SK-N-SH (cell line): ENCODE measurements at regions of chr5 and their contacts with region 1.

Region 1: GRCh38 chr5:172707285-172708182 is 63.5 kb downstream of the DUSP1 start:
- DNase-seq: peak; percentile 79
- H3K4me3 ChIP-seq: no peak overlapping the region
- H3K27ac ChIP-seq: no peak overlapping the region
- H3K4me1 ChIP-seq: peaks cover 0 to 3% of the 10 kb centered on the region in 2 experiments; a peak in 2 of 4 replicates
- H3K27me3 ChIP-seq: no peaks in the 10 kb centered on the region
- CTCF ChIP-seq: peak; percentile 74
- EP300 ChIP-seq: no peak
- RAD21 ChIP-seq: peak; percentile 87

Region 2: GRCh38 chr5:172770675-172771438 is 63.3 kb after region 1 on chr5 and contains the start of gene DUSP1:
- CTCF ChIA-PET with region 1: interaction called, 113 read pairs
- POLR2A ChIA-PET with region 1: interaction called, 3 read pairs
- DNase-seq: peak; percentile 99
- H3K4me3 ChIP-seq: peak within 1 kb of the TSS; percentile 89 to 93
- H3K27ac ChIP-seq: peak within 1 kb of the TSS; percentile 97 to 100
- H3K4me1 ChIP-seq: peaks cover 23 to 36% of the 10 kb centered on the region in 2 experiments
- H3K27me3 ChIP-seq: no peaks in the 10 kb centered on the region
- CTCF ChIP-seq: peak; percentile 50
- EP300 ChIP-seq: no peak
- RAD21 ChIP-seq: peak; percentile 36
- polyA plus RNA-seq, gene DUSP1: 373 and 455 TPM in 2 replicates

Region 3: DNA sequence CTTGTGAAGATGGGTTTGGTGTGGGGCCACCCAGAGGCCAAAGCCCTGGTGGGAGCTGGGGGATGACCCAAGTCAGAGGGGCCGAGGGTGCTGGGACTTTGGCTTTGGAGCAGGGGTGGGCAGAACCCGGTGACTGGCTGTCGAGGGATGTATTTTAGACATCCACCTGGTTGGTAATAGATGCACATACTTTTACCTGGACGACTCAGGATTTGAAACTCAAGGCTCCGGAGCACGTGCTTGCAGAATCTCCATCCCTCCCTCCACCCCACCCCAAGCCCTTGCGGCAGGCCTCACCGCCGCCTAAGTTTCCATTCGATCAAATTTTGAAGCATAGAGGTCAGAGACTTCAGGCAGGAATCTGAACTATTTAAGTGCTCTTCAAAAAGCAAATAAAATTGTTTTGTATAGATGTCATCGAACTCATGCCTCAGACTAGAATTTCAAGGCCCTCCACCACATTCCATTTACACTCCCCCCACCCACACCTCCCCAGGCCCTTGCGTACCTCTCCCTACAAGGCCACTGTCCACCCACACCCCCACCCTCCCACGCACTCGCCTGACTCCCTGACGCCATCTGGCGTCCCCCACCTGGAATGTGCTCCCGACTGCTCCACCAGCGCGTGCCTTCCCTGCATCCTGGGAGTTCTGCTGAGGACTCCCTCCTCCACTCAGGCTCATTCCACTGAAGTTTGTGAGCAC is 195.1 kb after region 1 on chr5:
- CTCF ChIA-PET with region 1: interaction called, 23 read pairs
- POLR2A ChIA-PET with region 1: no interaction called
- DNase-seq: peak; percentile 72
- H3K4me3 ChIP-seq: no peak overlapping the region
- H3K27ac ChIP-seq: peak overlapping the region in 1 of 2 experiments; percentile 100; a peak in 2 of 4 replicates
- H3K4me1 ChIP-seq: peaks cover 30 to 68% of the 10 kb centered on the region in 2 experiments
- H3K27me3 ChIP-seq: no peaks in the 10 kb centered on the region
- CTCF ChIP-seq: peak; percentile 50
- EP300 ChIP-seq: no peak
- RAD21 ChIP-seq: peak; percentile 58

Region 4: DNA sequence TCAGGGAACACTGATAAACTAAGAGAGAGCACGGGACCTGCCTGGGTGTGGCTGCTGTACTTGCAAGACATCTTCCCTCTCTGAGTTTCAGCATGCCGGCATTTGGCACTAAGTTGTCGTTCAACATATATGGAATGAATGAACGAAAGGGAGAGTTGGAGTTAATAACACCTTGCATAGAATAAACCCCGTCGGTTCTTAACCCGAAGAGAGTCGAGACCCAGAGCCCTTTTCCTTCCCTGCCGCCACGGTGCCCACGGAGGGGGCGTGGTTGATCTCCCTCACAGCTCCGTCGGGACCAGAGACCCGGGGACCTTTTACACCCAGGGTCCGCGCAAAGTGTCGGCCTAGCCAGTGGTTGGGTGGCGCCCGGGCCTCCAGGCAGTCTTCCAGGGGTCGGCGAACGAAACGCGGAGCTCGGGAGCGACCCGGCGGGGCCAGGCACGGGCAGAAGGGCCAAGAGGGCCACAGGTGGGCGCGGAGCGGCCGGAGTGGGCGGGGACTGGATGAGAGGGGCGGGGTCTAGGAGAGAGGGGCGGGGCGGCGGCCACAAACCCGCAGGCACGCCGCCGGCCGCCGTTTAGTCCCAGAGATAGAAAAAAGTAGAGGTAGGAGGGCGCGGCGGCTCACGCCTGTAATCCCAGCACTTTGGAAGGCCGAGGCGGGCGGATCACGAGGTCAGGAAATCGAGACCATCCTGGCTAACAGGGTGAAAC is 251.0 kb after region 1 on chr5:
- CTCF ChIA-PET with region 1: interaction called, 11 read pairs
- POLR2A ChIA-PET with region 1: no interaction called
- DNase-seq: peak; percentile 95
- H3K4me3 ChIP-seq: peak overlapping the region; percentile 86 to 99
- H3K27ac ChIP-seq: peak overlapping the region in 1 of 2 experiments; percentile 97; a peak in 3 of 4 replicates
- H3K4me1 ChIP-seq: peaks cover 10 to 14% of the 10 kb centered on the region in 2 experiments; a peak in 2 of 4 replicates
- H3K27me3 ChIP-seq: no peaks in the 10 kb centered on the region
- CTCF ChIP-seq: no peak
- EP300 ChIP-seq: no peak
- RAD21 ChIP-seq: no peak